ENCODE measurements at regions of chr4 and their contacts with region 1.

Region 1: GRCh38 chr4:144174401-144175067 is 34.0 kb upstream of the GYPA start:
- DNase-seq: peak; percentile 18 to 60 (median 23)
- ATAC-seq: peak; percentile 76
- H3K4me3 ChIP-seq: no peak overlapping the region
- H3K27ac ChIP-seq: no peak overlapping the region
- H3K4me1 ChIP-seq: no peaks in the 10 kb centered on the region
- H3K27me3 ChIP-seq: no peaks in the 10 kb centered on the region; a peak in 1 of 5 replicates
- CTCF ChIP-seq: peak; percentile 18 to 70 (median 41); a peak in 3 of 6 replicates
- EP300 ChIP-seq: no peak
- POLR2A ChIP-seq: no peak
- RAD21 ChIP-seq: peak; percentile 63 to 71

Region 2: DNA sequence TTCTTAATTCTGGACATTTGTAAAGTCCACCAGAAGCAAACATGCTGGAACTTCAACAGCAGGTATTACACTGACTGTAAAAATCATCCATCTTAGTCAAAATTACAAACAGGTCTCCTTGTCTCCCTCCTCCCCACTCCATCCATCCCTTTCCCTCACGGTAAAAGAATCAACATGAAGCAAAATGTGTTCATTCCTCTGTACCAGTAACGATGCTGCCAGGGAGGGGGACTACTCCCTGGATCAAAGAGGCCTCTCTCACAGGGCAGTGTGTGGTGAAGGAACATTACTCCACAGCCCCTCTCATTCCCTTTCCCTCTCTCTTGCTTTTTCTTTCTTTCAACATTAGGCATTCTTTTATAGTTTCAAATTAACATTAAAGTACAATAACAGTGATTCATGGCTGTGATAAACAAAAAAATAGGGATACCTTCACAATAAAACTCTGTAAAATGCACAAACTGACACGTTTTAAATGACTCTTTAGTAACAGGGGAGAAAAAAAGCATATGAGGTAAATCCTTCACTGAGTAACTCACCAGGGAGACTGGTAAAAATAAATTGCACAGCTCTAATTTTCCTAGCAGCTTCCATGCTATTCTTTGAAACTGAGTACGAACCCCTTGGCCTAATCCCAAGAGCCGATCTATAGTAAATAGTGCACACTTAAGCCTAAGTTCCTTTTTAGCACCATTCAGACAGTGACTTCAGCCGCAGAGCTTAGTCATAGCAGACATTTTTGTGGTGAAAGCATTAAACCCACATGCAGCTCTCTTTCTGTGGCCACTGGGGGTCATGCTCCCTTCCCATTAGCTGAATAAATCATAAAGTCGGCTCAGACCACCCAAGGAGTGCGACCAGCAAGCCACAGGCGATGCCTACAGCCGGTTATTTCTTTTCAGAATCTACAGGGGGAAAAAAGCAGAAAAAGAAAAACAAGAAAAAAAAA is 181.5 kb after region 1 on chr4:
- CTCF ChIA-PET with region 1: no interaction called
- POLR2A ChIA-PET with region 1: no interaction called
- in situ Hi-C with region 1: no loop called
- intact Hi-C with region 1: loop called (anchors 10 kb)
- DNase-seq: peak in 2 of 4 experiments; percentile 11 to 18
- ATAC-seq: peak; percentile 80
- H3K4me3 ChIP-seq: no peak overlapping the region
- H3K27ac ChIP-seq: no peak overlapping the region
- H3K4me1 ChIP-seq: no peaks in the 10 kb centered on the region; a peak in 1 of 5 replicates
- H3K27me3 ChIP-seq: no peaks in the 10 kb centered on the region
- CTCF ChIP-seq: peak in 1 of 3 experiments; percentile 5; a peak in 1 of 6 replicates
- EP300 ChIP-seq: no peak
- POLR2A ChIP-seq: no peak
- RAD21 ChIP-seq: no peak

Region 3: GRCh38 chr4:144574000-144574399 is 399.5 kb after region 1 on chr4:
- CTCF ChIA-PET with region 1: no interaction called
- POLR2A ChIA-PET with region 1: no interaction called
- in situ Hi-C with region 1: no loop called
- intact Hi-C with region 1: loop called (anchors 2 kb)
- DNase-seq: no peak
- ATAC-seq: no peak
- H3K4me3 ChIP-seq: no peak overlapping the region
- H3K27ac ChIP-seq: no peak overlapping the region
- H3K4me1 ChIP-seq: no peaks in the 10 kb centered on the region
- H3K27me3 ChIP-seq: no peaks in the 10 kb centered on the region
- CTCF ChIP-seq: no peak
- EP300 ChIP-seq: no peak
- POLR2A ChIP-seq: no peak
- RAD21 ChIP-seq: no peak

Region 4: DNA sequence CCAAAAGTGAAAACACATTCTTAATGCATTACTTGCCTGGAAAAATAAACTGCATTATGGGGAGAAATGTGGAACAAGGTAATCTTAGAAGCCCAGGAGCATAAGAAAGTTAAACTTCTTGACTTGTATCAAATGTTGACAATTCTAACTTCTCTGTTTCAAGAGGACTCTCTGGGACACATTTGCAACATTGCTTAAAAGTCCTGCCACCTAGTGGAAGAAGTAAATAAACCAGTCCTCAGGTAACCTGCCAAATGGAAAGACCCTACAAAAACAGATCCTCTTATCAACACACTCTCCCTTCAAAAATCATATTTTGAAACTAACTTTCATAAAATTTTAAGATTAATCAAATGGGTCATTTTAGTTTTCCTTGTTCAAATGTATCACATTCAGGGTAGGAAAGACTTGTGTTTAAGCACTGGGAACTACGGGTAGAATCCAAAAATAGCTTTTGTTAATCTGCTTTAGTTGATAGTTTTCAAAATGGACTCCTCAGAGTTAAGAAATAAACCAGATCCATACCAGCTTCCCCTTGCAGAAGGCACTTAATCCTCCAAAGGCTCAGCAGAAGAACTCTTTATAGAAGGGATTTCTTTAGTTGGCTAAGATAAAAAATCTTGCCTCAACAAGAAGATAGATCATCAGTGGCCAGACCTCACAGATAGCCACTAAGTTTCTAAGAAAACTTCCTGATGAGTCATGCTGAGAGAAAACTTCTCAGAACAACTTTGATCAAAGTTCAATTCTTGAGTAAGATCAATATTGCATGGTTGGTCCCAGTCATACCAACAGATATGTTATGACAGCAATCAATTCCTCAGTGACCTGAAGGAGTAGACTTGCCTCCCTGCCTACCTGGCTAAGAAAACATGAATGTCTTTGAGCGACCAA is 613.1 kb after region 1 on chr4:
- CTCF ChIA-PET with region 1: no interaction called
- POLR2A ChIA-PET with region 1: no interaction called
- in situ Hi-C with region 1: loop called (anchors 25 kb)
- intact Hi-C with region 1: loop called (anchors 1 kb)
- DNase-seq: peak; percentile 22 to 26 (median 24)
- ATAC-seq: peak; percentile 70; the same call in 2 of the 3 replicates
- H3K4me3 ChIP-seq: no peak overlapping the region
- H3K27ac ChIP-seq: no peak overlapping the region
- H3K4me1 ChIP-seq: no peaks in the 10 kb centered on the region
- H3K27me3 ChIP-seq: no peaks in the 10 kb centered on the region
- CTCF ChIP-seq: peak; percentile 32 to 54 (median 51); a peak in 5 of 6 replicates
- EP300 ChIP-seq: no peak
- POLR2A ChIP-seq: no peak
- RAD21 ChIP-seq: peak; percentile 10 to 46; a peak in 2 of 4 replicates

Region 5: DNA sequence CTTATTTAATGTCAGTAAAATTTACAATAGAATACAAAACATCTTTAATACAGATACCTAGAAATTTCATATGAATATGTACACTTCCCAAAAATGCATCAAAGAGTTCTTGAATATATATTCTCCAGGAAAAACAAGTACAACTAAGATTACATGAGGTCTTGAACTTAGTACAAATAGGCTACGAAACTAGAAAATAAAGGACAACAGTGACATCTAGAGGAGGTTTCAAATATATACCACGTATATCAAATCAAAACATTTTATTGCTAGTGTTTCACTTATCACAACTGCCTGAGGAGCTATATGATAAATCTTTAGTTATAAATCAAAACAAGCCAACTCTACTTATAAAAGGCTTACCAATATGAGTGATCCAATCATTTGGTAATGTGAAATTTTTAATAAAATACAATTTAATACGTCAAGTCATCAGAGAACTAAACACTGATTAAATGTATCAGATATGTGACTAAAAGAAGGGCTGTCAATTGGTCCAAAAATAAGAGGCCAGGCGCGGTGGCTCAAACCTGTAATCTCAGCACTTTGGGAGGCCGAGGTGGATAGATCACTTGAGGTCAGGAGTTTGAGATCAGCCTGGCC is 886.9 kb after region 1 on chr4:
- CTCF ChIA-PET with region 1: interaction called, 7 read pairs
- POLR2A ChIA-PET with region 1: no interaction called
- in situ Hi-C with region 1: loop called (anchors 25 kb)
- intact Hi-C with region 1: loop called (anchors 2 kb)
- DNase-seq: peak in 3 of 4 experiments; percentile 10 to 51 (median 11)
- ATAC-seq: peak; percentile 85
- H3K4me3 ChIP-seq: no peak overlapping the region
- H3K27ac ChIP-seq: no peak overlapping the region
- H3K4me1 ChIP-seq: no peaks in the 10 kb centered on the region
- H3K27me3 ChIP-seq: no peaks in the 10 kb centered on the region
- CTCF ChIP-seq: peak in 2 of 3 experiments; percentile 9 to 63; a peak in 4 of 6 replicates
- EP300 ChIP-seq: no peak
- POLR2A ChIP-seq: no peak
- RAD21 ChIP-seq: peak; percentile 52 to 62

Region 6: DNA sequence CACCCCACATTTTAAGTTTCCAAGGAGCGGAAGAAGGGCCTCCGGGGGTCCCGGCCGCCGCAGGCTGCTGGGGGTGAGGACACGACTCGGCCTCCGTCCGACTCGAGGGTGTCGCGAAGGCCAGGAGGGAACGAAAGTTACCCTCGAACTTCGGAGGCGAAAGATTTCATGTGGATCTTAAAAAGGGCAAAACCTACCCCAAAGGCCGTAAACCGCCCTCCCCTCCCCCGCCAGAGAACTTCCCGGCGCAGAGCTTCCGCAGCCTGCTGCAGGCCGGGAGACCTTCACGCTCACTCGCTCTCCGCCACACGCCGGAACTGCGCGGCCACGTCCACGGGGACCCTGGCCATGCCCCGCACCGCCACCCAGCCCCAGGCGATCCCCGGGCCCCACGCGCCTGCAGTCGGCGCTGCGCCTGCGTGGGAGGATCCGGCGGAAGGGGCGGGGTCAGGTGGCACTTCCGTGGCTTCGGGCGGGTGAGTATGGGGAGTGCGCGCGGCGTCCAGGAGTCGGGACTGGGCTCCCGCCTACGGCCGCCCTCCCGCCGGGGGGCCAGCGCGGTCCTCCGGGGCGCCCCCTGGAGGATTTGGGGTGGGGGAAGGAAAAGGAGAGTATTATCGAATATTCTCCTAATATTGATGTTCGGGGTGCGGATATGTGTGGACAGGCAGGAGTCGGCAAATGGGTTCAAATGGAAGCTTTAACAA is 1444.6 kb after region 1 on chr4 and contains the start of gene MMAA:
- CTCF ChIA-PET with region 1: no interaction called
- POLR2A ChIA-PET with region 1: no interaction called
- in situ Hi-C with region 1: no loop called
- intact Hi-C with region 1: loop called (anchors 10 kb)
- DNase-seq: peak; percentile 94 to 96 (median 96)
- ATAC-seq: peak; percentile 99
- H3K4me3 ChIP-seq: peak within 1 kb of the TSS; percentile 70
- H3K27ac ChIP-seq: peak within 1 kb of the TSS; percentile 90
- H3K4me1 ChIP-seq: peaks cover 0 to 5% of the 10 kb centered on the region in 2 experiments; a peak in 2 of 5 replicates
- H3K27me3 ChIP-seq: no peaks in the 10 kb centered on the region
- CTCF ChIP-seq: peak; percentile 68 to 82 (median 74)
- EP300 ChIP-seq: no peak
- POLR2A ChIP-seq: peak; percentile 93
- RAD21 ChIP-seq: 0 out of 4 replicates have a peak, but pooled peaks of 1 of the 2 experiments have one; percentile 31
- polyA plus RNA-seq, gene MMAA: 0.96 to 1.5 TPM